ENCODE measurements at regions of chr18 and their contacts with region 1.

Region 1: DNA sequence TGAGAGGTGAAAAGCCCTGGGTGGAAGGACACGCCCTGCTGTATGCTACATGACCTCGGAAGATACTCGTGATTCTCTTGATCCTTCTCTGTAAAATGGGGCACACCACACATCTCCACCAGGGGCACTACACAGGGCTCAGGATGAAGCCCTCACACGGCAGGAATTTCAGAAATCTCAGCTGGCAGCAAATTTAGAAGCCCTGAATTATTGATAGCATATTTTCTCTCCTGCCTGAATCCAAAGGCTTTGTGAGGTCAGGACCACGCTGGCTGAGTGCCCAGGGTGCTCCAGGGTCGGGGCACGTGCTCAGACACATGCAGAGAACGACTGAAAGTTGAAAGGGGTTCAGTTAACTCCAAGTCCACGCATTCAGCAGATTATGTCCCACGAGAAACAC is 42.1 kb upstream of the GALR1 start:
- DNase-seq: peak; percentile 91

Region 2: DNA sequence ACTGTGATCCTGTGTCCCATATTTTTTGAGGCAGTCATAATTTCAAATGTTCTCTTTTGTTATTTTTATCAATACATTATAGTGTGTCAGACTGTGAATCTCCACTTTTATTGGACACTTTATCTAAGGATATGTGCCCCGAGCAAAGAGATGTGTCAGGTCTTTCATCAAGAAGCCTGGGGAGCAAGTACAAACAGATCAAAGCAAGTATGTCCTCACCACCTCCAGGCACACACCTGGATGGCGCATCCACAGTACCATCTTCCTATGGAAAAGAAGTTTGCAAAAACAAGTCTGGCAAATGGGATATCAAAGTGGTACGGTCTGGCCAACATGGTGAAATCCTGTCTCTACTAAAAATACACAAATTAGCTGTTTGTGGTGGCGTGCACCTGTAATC is 466.2 kb before region 1 on chr18:
- intact Hi-C with region 1: loop called in 1 of 2 experiments (anchors 5 kb)
- DNase-seq: no peak

Region 3: DNA sequence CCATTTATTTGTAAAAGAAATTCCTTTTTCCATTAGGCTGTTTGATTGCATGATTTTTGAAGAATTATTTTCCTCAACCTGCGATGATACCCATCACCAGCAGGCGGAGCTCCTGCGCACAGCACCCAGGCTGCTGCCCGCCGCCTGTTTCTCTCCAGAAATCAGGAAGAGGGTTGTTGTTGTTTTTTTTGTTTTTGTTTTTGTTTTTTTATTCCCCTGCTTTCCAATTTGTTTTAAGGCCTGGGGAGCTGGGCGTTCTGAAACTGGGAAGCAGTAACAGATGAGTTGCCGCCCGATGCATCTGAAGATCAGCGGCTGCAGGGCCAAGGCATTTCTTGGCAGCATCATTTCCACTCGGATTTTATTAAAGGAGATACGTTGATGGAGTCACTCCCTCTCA is 207.0 kb before region 1 on chr18:
- intact Hi-C with region 1: loop called (anchors 5 kb)
- DNase-seq: no peak

Region 4: GRCh38 chr18:77054606-77055428 is 152.7 kb before region 1 on chr18:
- intact Hi-C with region 1: loop called in 1 of 2 experiments (anchors 5 kb)
- DNase-seq: peak; percentile 95

Region 5: GRCh38 chr18:77132371-77133050 is 75.0 kb before region 1 on chr18 and contains the start of gene MBP:
- intact Hi-C with region 1: loop called (anchors 2 to 10 kb)
- DNase-seq: peak; percentile 88
- total RNA-seq, gene MBP: 41.6 to 42.1 TPM

Region 6: GRCh38 chr18:77223653-77224052 is 16.1 kb after region 1 on chr18:
- intact Hi-C with region 1: no loop called
- DNase-seq: no peak

Measured in posterior vena cava (tissue), 2 donors.